ENCODE measurements at regions of chr7 and their contacts with region 1.

Region 1: GRCh38 chr7:142811154-142811737 is 40.5 kb downstream of the PRSS2 start:
- DNase-seq: peak; percentile 52
- ATAC-seq: no peak
- H3K4me3 Mint-ChIP-seq: peak overlapping the region; percentile 68
- H3K27ac Mint-ChIP-seq: peak overlapping the region; percentile 99
- H3K4me1 Mint-ChIP-seq: peaks cover 83% of the 10 kb centered on the region
- H3K27me3 Mint-ChIP-seq: no peaks in the 10 kb centered on the region

Region 2: GRCh38 chr7:140924019-140924820 is 1887.0 kb before region 1 on chr7:
- CTCF ChIA-PET with region 1: no interaction called
- POLR2A ChIA-PET with region 1: no interaction called
- intact Hi-C with region 1: loop called in 1 of 2 experiments (anchors 5 kb)
- DNase-seq: peak; percentile 79
- ATAC-seq: peak; percentile 71
- H3K4me3 Mint-ChIP-seq: no peak overlapping the region
- H3K27ac Mint-ChIP-seq: no peak overlapping the region
- H3K4me1 Mint-ChIP-seq: peaks cover 9% of the 10 kb centered on the region
- H3K27me3 Mint-ChIP-seq: no peaks in the 10 kb centered on the region

Region 3: GRCh38 chr7:142338633-142339501 is 472.4 kb before region 1 on chr7:
- CTCF ChIA-PET with region 1: interaction called, 10 read pairs
- POLR2A ChIA-PET with region 1: interaction called, 3 read pairs
- intact Hi-C with region 1: no loop called
- DNase-seq: peak; percentile 57
- ATAC-seq: peak; percentile 43
- H3K4me3 Mint-ChIP-seq: peak overlapping the region; percentile 14
- H3K27ac Mint-ChIP-seq: peak overlapping the region; percentile 68
- H3K4me1 Mint-ChIP-seq: peaks cover 16% of the 10 kb centered on the region
- H3K27me3 Mint-ChIP-seq: peaks cover 5% of the 10 kb centered on the region

Region 4: DNA sequence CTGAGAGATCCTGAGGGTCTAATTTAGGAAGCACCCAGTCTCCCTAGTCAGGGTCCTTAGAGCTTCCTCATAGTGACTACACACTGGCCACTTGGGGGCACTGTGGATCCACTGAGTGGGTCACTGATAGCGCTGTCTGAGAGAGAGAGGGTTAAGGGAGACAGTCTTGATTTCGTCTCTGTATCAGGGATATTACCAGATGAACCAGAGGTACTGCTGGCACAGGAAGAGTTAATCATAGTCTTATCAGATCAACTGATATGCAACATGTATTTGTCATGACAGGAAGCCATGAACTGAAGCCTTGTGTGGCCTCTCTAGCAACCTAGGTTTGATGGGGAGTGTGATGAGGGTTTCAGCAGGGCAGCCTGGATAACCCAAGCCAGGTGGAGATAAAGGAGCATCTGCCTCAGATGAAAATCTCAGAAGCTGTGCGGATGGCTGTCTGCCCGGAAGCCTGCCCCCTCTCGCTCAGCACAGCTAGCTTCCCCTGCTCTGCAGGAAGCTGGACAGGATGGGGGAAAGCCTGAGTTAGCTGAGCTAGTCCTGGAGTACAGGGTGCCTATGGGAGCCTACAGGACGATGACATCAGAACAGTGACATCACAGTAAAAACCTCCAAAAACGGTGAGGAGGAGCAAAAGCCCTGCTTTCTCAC is 276.0 kb before region 1 on chr7:
- CTCF ChIA-PET with region 1: interaction called, 21 read pairs
- POLR2A ChIA-PET with region 1: interaction called, 11 read pairs
- intact Hi-C with region 1: loop called (anchors 1 kb)
- DNase-seq: peak; percentile 90
- ATAC-seq: peak; percentile 87
- H3K4me3 Mint-ChIP-seq: peak overlapping the region; percentile 63
- H3K27ac Mint-ChIP-seq: peak overlapping the region; percentile 77
- H3K4me1 Mint-ChIP-seq: peaks cover 30% of the 10 kb centered on the region
- H3K27me3 Mint-ChIP-seq: no peaks in the 10 kb centered on the region

Region 5: GRCh38 chr7:142669074-142669654 is 142.1 kb before region 1 on chr7:
- CTCF ChIA-PET with region 1: interaction called, 6 read pairs
- POLR2A ChIA-PET with region 1: no interaction called
- intact Hi-C with region 1: loop called (anchors 1 kb)
- DNase-seq: no peak
- ATAC-seq: peak; percentile 39
- H3K4me3 Mint-ChIP-seq: no peak overlapping the region
- H3K27ac Mint-ChIP-seq: peak overlapping the region; percentile 59
- H3K4me1 Mint-ChIP-seq: peaks cover 28% of the 10 kb centered on the region
- H3K27me3 Mint-ChIP-seq: no peaks in the 10 kb centered on the region

Region 6: GRCh38 chr7:142835487-142835886 is 24.2 kb after region 1 on chr7:
- CTCF ChIA-PET with region 1: interaction called, 26 read pairs
- POLR2A ChIA-PET with region 1: interaction called, 4 read pairs
- intact Hi-C with region 1: no loop called
- DNase-seq: peak; percentile 26
- ATAC-seq: peak; percentile 58
- H3K4me3 Mint-ChIP-seq: no peak overlapping the region
- H3K27ac Mint-ChIP-seq: peak overlapping the region; percentile 56
- H3K4me1 Mint-ChIP-seq: peaks cover 26% of the 10 kb centered on the region
- H3K27me3 Mint-ChIP-seq: no peaks in the 10 kb centered on the region

Region 7: GRCh38 chr7:143380255-143380645 is 569.0 kb after region 1 on chr7:
- CTCF ChIA-PET with region 1: no interaction called
- POLR2A ChIA-PET with region 1: interaction called, 3 read pairs
- intact Hi-C with region 1: loop called (anchors 2 to 10 kb)
- DNase-seq: peak; percentile 93
- ATAC-seq: peak; percentile 57
- H3K4me3 Mint-ChIP-seq: peak overlapping the region; percentile 82
- H3K27ac Mint-ChIP-seq: peak overlapping the region; percentile 89
- H3K4me1 Mint-ChIP-seq: peaks cover 39% of the 10 kb centered on the region
- H3K27me3 Mint-ChIP-seq: no peaks in the 10 kb centered on the region

Measured in activated CD4-positive, alpha-beta T cell treated with anti-CD3 and anti-CD28 coated beads for 36 hours (primary cell).